B cell (primary cell): ENCODE measurements at regions of chr16 and their contacts with region 1.

Region 1: DNA sequence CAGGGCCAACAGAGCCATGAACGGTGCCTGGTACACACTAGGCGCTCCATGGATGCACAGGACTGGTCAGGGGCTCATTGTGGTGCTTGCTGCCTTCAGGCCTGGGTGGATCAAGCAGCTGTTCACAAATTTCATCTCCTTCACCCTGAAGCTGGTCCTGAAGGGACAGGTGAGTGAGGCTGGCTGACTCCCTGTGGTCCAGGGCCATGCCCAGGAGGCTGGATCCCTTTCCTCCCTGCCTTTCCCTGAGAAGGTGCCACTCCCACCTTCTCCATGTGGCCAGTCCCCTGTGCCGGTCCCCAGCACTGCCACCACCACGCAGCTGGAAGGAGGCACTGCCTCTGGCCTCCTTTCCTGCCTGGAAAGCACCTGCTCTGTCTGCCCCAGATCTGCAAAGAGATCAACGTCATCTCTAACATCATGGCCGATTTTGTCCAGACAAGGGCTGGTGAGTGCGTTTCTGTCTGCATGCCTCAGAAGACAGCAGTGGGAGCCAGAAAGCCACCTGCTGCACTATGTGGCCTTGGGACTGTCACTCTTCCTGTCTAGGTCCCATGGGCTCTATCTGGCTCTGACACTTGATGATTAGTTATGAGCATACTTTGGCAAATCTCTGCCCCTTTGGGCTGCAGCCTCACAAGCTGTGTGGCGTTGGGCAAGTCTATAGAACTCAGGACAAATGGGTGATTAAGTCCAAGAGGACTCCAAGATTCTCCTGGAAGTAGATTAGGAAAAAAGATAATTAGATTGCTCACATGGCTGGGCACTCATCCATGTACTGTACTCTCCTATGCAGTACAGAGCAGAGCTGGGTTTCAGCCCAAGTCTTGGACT is 9.4 kb downstream of the CETP start:
- DNase-seq: peak; percentile 87
- ATAC-seq: peak; percentile 92
- H3K4me3 ChIP-seq: no peak overlapping the region
- H3K4me3 Mint-ChIP-seq: peak overlapping the region; percentile 82
- H3K27ac ChIP-seq: peak overlapping the region; percentile 39 to 57
- H3K27ac Mint-ChIP-seq: peak overlapping the region; percentile 97
- H3K4me1 ChIP-seq: peaks cover 55 to 62% of the 10 kb centered on the region in 2 donors
- H3K4me1 Mint-ChIP-seq: peaks cover 60% of the 10 kb centered on the region
- H3K27me3 ChIP-seq: no peaks in the 10 kb centered on the region
- H3K27me3 Mint-ChIP-seq: no peaks in the 10 kb centered on the region
- CTCF ChIP-seq: no peak

Region 2: GRCh38 chr16:57013229-57013628 is 42.1 kb after region 1 on chr16:
- CTCF ChIA-PET with region 1: interaction called, 49 read pairs
- POLR2A ChIA-PET with region 1: interaction called, 3 read pairs
- intact Hi-C with region 1: loop called (anchors 2 kb)
- DNase-seq: no peak
- ATAC-seq: no peak
- H3K4me3 ChIP-seq: no peak overlapping the region
- H3K4me3 Mint-ChIP-seq: peak overlapping the region; percentile 66
- H3K27ac ChIP-seq: peak overlapping the region in 1 of 2 donors; percentile 75
- H3K27ac Mint-ChIP-seq: peak overlapping the region; percentile 41
- H3K4me1 ChIP-seq: peaks cover 36 to 45% of the 10 kb centered on the region in 2 donors
- H3K4me1 Mint-ChIP-seq: peaks cover 47% of the 10 kb centered on the region
- H3K27me3 ChIP-seq: no peaks in the 10 kb centered on the region
- H3K27me3 Mint-ChIP-seq: no peaks in the 10 kb centered on the region
- CTCF ChIP-seq: no peak